GM12878 (cell line): ENCODE measurements at regions of chr14 and their contacts with region 1.

Region 1: DNA sequence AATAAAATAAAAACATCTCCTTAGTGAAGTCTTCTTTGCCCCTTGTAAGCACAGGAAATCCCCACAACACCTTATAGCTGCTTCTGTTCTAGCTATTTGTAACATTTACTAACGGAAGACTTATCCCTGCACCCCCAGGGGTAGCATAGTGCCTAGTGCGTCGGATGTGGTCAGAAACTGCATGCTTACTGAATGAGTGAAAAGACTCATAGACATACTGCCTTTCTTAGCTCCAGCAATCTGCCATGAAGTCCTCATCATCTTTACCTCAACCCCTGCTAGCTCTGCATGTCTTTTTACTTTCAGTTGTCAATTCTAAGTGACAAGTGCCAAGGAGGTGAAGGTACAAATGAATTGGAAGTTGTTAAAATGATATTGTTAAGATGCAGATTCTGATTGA is 12.9 kb downstream of the RIOX1 start:
- DNase-seq: peak; percentile 27
- ATAC-seq: peak; percentile 59
- H3K4me3 ChIP-seq: no peak overlapping the region
- H3K27ac ChIP-seq: no peak overlapping the region
- H3K4me1 ChIP-seq: peaks cover 5% of the 10 kb centered on the region
- H3K27me3 ChIP-seq: no peaks in the 10 kb centered on the region
- CTCF ChIP-seq: no peak
- EP300 ChIP-seq: no peak
- POLR2A ChIP-seq: no peak
- RAD21 ChIP-seq: no peak

Region 2: GRCh38 chr14:73477618-73478266 is 25.9 kb before region 1 on chr14:
- CTCF ChIA-PET with region 1: interaction called, 14 read pairs
- POLR2A ChIA-PET with region 1: no interaction called
- RAD21 ChIA-PET with region 1: interaction called, 22 read pairs
- SMC1A ChIA-PET with region 1: interaction called, 22 read pairs
- in situ Hi-C with region 1: no loop called
- intact Hi-C with region 1: no loop called
- DNase-seq: peak; percentile 90
- ATAC-seq: peak; percentile 88
- H3K4me3 ChIP-seq: no peak overlapping the region
- H3K27ac ChIP-seq: peak overlapping the region; percentile 68
- H3K4me1 ChIP-seq: peaks cover 17% of the 10 kb centered on the region
- H3K27me3 ChIP-seq: no peaks in the 10 kb centered on the region
- CTCF ChIP-seq: no peak
- EP300 ChIP-seq: peak; percentile 73 to 89; a peak in 2 of 4 replicates
- POLR2A ChIP-seq: no peak
- RAD21 ChIP-seq: peak; percentile 24; the same call in 1 of the 2 replicates

Region 3: DNA sequence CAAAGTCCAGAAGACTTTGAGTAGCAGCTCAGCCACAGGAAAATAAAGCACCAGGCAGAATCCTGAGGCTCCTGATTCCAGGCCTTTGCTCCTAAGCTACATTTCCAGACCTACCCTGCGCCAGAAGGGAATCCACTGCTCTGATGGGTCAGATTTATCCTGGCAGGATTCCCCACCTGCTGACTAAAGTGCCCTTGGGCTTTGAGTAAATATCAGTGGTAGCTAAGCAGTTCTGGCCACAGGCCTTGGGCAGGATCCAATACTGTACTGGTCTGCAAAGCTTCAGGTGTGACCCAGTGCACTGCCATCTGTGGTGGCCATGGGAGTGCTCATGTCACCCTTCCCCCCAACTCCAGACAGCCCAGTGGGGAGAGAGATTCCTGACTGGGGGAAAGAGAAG is 22.9 kb after region 1 on chr14:
- CTCF ChIA-PET with region 1: interaction called, 10 read pairs
- POLR2A ChIA-PET with region 1: interaction called, 3 read pairs
- RAD21 ChIA-PET with region 1: no interaction called
- SMC1A ChIA-PET with region 1: no interaction called
- in situ Hi-C with region 1: no loop called
- intact Hi-C with region 1: no loop called
- DNase-seq: no peak
- ATAC-seq: no peak
- H3K4me3 ChIP-seq: no peak overlapping the region
- H3K27ac ChIP-seq: no peak overlapping the region
- H3K4me1 ChIP-seq: no peaks in the 10 kb centered on the region
- H3K27me3 ChIP-seq: 0 out of 4 replicates have a peak, but pooled peaks cover 0 to 2% of the 10 kb centered on the region in 2 experiments
- CTCF ChIP-seq: no peak
- EP300 ChIP-seq: no peak
- POLR2A ChIP-seq: no peak
- RAD21 ChIP-seq: no peak

Region 4: DNA sequence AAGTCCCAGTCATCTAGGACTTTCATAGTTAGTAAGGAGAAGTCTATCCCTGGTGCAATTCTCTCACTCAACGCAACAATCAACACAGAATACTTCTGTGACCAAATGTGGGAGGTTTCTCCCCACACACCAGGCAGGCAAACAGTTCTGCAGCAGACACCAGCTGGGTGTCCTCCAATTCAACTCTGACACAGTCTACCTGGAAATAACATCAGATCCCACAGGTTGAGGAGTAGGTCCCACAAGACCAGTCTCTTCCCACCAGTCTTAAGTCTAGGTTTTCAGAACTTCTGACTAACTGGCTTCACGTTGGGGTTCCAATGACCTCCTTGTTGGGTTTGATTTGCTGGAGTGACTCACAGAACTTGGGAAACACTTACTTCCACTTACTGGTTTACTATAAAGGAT is 123.5 kb after region 1 on chr14:
- CTCF ChIA-PET with region 1: interaction called, 220 read pairs
- POLR2A ChIA-PET with region 1: no interaction called
- RAD21 ChIA-PET with region 1: interaction called, 68 read pairs
- SMC1A ChIA-PET with region 1: interaction called, 54 read pairs
- in situ Hi-C with region 1: loop called (anchors 5 kb)
- intact Hi-C with region 1: no loop called
- DNase-seq: no peak
- ATAC-seq: no peak
- H3K4me3 ChIP-seq: no peak overlapping the region
- H3K27ac ChIP-seq: no peak overlapping the region
- H3K4me1 ChIP-seq: no peaks in the 10 kb centered on the region
- H3K27me3 ChIP-seq: no peaks in the 10 kb centered on the region
- CTCF ChIP-seq: no peak
- EP300 ChIP-seq: no peak
- POLR2A ChIP-seq: no peak
- RAD21 ChIP-seq: no peak

Region 5: DNA sequence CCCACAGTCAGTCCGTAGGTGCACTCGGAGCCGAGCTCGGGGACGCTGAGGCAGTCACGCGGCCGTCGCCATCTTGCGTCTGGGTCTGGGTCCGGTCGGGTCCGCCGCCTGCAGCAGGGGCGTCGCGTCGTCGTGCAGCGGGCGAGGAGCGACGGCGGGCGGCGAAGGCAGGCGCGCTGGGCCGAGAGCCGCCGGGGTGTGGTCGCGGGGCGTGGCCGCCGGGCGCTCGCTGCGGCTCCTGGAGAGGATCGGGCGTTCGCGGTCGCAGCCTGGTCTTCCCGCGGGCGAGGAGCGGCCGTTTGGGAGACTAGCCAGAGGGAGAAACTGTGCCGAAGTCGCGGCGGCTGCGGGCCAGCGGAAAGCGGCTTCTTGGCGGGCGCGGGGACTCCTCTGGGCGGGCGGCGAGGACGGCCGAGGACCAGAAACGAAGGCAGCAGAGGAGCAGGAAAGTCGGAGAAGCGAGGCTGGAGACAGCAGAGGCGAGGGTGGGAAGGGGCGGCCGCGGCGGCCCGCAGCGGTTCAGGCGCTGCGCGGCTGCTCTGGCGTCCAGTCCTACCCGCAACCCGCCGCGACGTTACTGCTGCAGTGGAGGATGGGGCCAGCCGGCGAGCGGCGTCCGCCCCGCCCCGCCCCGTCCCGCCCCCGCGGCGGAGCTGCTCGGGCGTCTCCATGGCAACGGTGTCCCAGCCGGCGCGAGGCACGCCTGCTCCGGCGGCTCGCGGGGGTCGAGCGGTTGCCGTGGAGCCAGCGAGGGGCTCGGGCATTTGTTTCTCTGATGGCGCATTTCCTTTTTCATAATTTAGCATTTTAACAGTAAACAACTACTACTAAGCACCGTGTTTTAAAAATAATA is 210.4 kb after region 1 on chr14 and contains the start of gene PNMA1:
- CTCF ChIA-PET with region 1: no interaction called
- POLR2A ChIA-PET with region 1: no interaction called
- RAD21 ChIA-PET with region 1: no interaction called
- SMC1A ChIA-PET with region 1: interaction called, 10 read pairs
- in situ Hi-C with region 1: no loop called
- intact Hi-C with region 1: no loop called
- DNase-seq: no peak
- ATAC-seq: peak; percentile 89
- H3K4me3 ChIP-seq: peak within 1 kb of the TSS; percentile 89
- H3K27ac ChIP-seq: peak within 1 kb of the TSS; percentile 63
- H3K4me1 ChIP-seq: peaks cover 4% of the 10 kb centered on the region
- H3K27me3 ChIP-seq: no peaks in the 10 kb centered on the region
- CTCF ChIP-seq: no peak
- EP300 ChIP-seq: no peak
- POLR2A ChIP-seq: peak; percentile 86
- RAD21 ChIP-seq: no peak
- polyA plus RNA-seq, gene PNMA1: 1.8 to 6.5 TPM